ENCODE measurements at regions of chr15 and their contacts with region 1.

Region 1: DNA sequence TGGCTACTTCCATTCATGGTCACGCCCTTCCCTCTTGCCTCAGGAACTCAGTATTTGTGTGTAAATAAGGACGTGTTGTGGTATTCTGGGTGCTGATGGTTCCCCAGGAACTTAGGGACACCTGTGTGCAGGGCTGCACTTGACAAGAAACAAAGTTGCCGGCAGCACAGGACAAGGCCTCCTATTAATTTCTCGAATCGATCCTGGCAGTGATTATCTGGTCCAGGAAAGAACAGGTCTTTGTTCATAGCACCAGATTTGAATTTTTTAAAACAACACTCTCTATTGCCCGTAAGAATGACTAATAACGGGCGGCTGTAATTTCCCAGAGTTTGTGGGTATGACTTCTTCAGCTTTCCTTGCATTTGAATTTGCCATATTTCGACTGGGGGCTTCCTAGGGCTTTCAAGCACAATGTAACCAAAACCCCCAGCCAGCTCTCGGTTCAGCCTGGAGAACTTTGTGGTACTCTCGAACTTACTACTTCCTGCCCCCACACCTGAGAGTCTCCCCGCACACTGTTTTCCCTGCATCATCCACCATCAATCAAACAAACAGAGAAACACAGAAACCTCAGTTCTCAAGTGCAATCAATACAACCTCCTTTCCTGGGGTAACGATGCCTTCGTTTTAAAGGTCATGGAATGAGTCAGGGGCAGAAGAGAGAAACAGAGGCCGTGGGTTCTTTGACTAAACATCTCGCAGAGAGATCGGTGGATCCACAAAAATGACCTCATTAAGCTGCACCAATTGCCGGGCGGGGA is 241.7 kb upstream of the ICE2 start:
- DNase-seq: peak; percentile 56
- ATAC-seq: peak; percentile 77
- H3K4me3 Mint-ChIP-seq: peak overlapping the region; percentile 36
- H3K27ac Mint-ChIP-seq: peak overlapping the region; percentile 16
- H3K4me1 Mint-ChIP-seq: peaks cover 31% of the 10 kb centered on the region
- H3K27me3 Mint-ChIP-seq: peaks cover 8% of the 10 kb centered on the region

Region 2: GRCh38 chr15:60649845-60650548 is 70.7 kb before region 1 on chr15:
- CTCF ChIA-PET with region 1: interaction called, 10 read pairs
- POLR2A ChIA-PET with region 1: no interaction called
- DNase-seq: peak; percentile 66
- ATAC-seq: peak; percentile 85
- H3K4me3 Mint-ChIP-seq: peak overlapping the region; percentile 70
- H3K27ac Mint-ChIP-seq: peak overlapping the region; percentile 74
- H3K4me1 Mint-ChIP-seq: peaks cover 41% of the 10 kb centered on the region
- H3K27me3 Mint-ChIP-seq: no peaks in the 10 kb centered on the region